Calu3 (cell line): ENCODE measurements at regions of chr7 and their contacts with region 1.

Region 1: GRCh38 chr7:45923290-45923689 is 2.2 kb upstream of the IGFBP3 start:
- DNase-seq: peak; percentile 95
- H3K4me3 Mint-ChIP-seq: peak overlapping the region; percentile 99
- H3K27ac Mint-ChIP-seq: peak overlapping the region; percentile 73
- H3K4me1 Mint-ChIP-seq: peaks cover 40% of the 10 kb centered on the region
- H3K27me3 Mint-ChIP-seq: no peaks in the 10 kb centered on the region
- CTCF ChIP-seq: peak; percentile 95

Region 2: DNA sequence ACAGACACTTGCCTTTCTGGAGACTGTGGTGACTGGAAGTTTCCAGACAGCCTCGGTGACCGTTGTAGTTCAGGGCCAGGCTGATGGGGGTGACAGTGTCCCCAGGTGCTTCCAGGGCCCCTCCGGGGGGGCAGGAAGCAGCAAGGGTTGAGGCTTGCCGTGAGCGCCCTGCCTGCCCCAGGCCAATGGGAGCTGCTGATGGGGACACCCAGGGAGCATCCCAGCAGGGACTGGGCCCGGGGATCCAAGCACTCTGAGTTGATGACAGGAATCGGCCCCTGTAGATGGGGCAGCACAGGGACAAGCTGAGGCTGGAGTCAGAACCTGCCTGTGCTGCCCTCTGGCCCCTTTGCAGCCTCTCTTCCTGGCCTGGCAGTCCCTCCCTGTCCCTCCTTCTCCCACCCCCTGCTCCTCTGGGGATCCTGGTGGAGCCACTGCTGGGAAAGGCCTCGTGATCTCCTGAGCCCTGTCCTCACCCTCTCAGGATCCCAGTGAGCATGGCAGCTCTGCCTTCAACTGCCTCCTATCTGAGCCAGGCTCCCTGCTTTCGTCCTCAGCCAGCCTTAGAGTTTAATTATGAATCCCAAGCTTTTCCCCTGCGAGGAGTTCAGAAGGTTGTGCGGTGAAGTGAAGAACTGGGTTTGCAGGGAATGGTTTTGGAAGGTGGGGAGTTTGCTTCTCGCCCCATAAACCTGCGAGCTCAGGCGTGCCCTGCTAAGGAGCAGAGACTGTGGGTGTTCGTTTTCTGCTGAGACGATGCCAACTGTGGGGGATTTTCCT is 264.4 kb before region 1 on chr7:
- CTCF ChIA-PET with region 1: no interaction called
- intact Hi-C with region 1: no loop called
- DNase-seq: no peak
- H3K4me3 Mint-ChIP-seq: no peak overlapping the region
- H3K27ac Mint-ChIP-seq: no peak overlapping the region
- H3K4me1 Mint-ChIP-seq: no peaks in the 10 kb centered on the region
- H3K27me3 Mint-ChIP-seq: peaks cover 27% of the 10 kb centered on the region
- CTCF ChIP-seq: no peak

Region 3: DNA sequence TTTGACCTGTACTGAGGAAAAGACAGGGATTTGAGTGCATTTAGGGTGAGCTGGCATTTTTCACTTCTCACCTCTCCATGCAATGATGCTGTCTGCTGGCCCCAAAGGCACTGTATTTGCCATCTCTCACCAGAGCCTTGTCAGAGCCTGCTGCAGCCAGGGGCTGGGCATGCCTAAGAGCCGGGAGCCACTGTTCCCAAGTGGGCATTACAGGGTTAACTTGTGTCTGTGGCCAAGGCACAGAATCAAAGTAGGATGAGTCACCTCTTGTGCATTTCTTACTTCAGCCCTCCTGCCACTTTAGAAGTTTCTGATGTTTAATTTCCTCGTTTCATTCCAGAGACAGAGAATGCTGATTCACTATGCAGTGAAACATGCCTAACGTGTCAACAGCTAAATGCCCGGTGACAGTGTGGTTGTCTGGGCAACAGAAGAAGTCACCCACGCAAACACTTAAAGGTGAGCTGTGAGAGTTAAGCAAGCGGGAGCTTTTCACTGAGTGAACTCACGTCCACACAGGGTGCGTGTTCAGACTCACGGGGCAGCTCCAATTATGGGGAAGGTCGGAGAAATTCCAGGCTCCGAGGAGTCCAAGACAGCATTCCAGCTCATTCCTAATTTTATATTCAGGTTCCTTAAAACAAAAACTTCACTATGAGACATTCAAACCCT is 54.9 kb after region 1 on chr7:
- CTCF ChIA-PET with region 1: interaction called, 47 read pairs
- intact Hi-C with region 1: loop called (anchors 2 kb)
- DNase-seq: peak; percentile 89
- H3K4me3 Mint-ChIP-seq: peak overlapping the region; percentile 37
- H3K27ac Mint-ChIP-seq: peak overlapping the region; percentile 99
- H3K4me1 Mint-ChIP-seq: peaks cover 73% of the 10 kb centered on the region
- H3K27me3 Mint-ChIP-seq: no peaks in the 10 kb centered on the region
- CTCF ChIP-seq: no peak

Region 4: DNA sequence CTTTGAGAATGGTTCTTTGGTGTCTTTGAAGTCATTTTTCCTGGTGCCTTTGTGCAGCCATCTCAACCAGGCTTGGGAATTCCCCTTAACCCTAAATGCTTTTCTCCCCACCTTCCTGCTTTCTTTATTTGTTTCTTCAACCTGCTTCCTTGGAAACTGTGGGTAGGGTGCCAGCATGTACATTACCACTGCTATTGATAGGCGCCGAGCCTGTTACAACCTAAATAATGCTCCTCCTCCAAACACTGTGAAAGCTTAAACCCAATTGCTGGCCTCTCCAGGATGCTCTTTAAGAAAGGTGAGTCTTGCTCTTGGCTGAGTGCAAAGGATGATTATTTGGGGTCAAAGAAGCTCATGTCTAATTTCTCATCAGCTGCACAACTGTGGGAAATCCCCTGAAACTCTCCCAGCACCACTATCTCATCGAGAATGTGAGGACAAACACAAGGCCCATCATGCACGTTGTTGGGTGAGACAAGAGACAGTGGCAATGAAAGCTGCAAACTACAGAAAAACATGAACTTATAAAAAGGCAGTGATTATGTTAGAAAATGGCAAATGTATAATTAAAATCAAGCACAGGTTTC is 283.3 kb after region 1 on chr7:
- CTCF ChIA-PET with region 1: interaction called, 11 read pairs
- intact Hi-C with region 1: loop called (anchors 5 kb)
- DNase-seq: peak; percentile 80
- H3K4me3 Mint-ChIP-seq: peak overlapping the region; percentile 19
- H3K27ac Mint-ChIP-seq: peak overlapping the region; percentile 97
- H3K4me1 Mint-ChIP-seq: peaks cover 70% of the 10 kb centered on the region
- H3K27me3 Mint-ChIP-seq: no peaks in the 10 kb centered on the region
- CTCF ChIP-seq: no peak

Region 5: GRCh38 chr7:46486256-46487206 is 563.2 kb after region 1 on chr7:
- CTCF ChIA-PET with region 1: interaction called, 4 read pairs
- intact Hi-C with region 1: loop called (anchors 5 kb)
- DNase-seq: peak; percentile 60
- H3K4me3 Mint-ChIP-seq: peak overlapping the region; percentile 19
- H3K27ac Mint-ChIP-seq: peak overlapping the region; percentile 83
- H3K4me1 Mint-ChIP-seq: peaks cover 50% of the 10 kb centered on the region
- H3K27me3 Mint-ChIP-seq: no peaks in the 10 kb centered on the region
- CTCF ChIP-seq: no peak

Region 6: GRCh38 chr7:46764100-46764936 is 841.0 kb after region 1 on chr7:
- CTCF ChIA-PET with region 1: no interaction called
- intact Hi-C with region 1: loop called (anchors 1 kb)
- DNase-seq: peak; percentile 90
- H3K4me3 Mint-ChIP-seq: peak overlapping the region; percentile 4
- H3K27ac Mint-ChIP-seq: peak overlapping the region; percentile 80
- H3K4me1 Mint-ChIP-seq: peaks cover 30% of the 10 kb centered on the region
- H3K27me3 Mint-ChIP-seq: no peaks in the 10 kb centered on the region
- CTCF ChIP-seq: no peak

Region 7: DNA sequence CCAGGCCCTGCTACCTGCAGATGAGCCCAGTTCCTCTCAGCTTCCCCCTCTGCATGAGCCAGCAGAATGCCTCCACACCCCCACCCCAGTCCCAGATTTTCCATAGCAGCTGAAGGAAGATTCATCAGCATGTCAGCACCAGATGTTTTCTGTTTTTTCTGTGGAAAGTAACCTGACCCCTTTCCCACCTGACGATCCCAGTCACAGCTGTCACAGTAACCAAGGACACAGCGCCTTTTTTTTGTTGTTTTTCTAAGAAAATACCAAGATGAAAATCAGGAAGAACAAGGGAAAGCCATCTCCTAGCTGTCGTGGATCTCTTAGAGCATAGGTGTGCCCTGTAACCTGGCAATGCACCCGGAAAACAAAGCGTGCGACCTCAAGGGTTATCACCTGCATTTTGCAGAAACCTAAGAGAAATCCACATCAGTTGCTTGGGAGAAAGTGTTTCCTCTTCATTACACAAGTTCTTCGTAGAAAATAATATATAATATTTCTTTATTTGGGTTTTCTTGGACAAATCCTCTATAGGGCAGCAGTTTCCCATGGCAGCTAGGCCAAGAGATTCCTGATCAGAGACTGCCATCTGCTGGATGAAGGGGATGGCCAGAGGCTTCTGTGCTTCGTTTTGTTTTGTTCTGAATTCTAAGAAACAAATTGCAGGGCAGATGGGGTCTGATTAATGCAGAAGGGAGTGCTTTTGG is 1256.7 kb after region 1 on chr7:
- CTCF ChIA-PET with region 1: interaction called, 8 read pairs
- intact Hi-C with region 1: loop called (anchors 2 kb)
- DNase-seq: peak; percentile 84
- H3K4me3 Mint-ChIP-seq: no peak overlapping the region
- H3K27ac Mint-ChIP-seq: no peak overlapping the region
- H3K4me1 Mint-ChIP-seq: peaks cover 21% of the 10 kb centered on the region
- H3K27me3 Mint-ChIP-seq: peaks cover 16% of the 10 kb centered on the region
- CTCF ChIP-seq: peak; percentile 89